Dorsolateral prefrontal cortex (tissue), 120 donors: ENCODE measurements at regions of chr18 and their contacts with region 1.

Region 1: GRCh38 chr18:26909599-26910290 is 44.2 kb upstream of the AQP4 start:
- DNase-seq: peak in 6 of 10 donors; percentile 23 to 63 (median 54)
- H3K4me3 ChIP-seq: no peak overlapping the region
- H3K27ac ChIP-seq: peak overlapping the region in 54 of 59 donors; percentile 19 to 88 (median 71)
- H3K27me3 ChIP-seq: no peaks in the 10 kb centered on the region
- CTCF ChIP-seq: no peak

Region 2: GRCh38 chr18:26863122-26863879 is 46.4 kb before region 1 on chr18:
- intact Hi-C with region 1: loop called in 1 of 2 experiments (anchors 5 kb)
- DNase-seq: peak; percentile 37 to 87 (median 76)
- H3K4me3 ChIP-seq: peak overlapping the region; percentile 11 to 67 (median 53)
- H3K27ac ChIP-seq: peak overlapping the region in 58 of 59 donors; percentile 61 to 96 (median 88)
- H3K27me3 ChIP-seq: peaks cover 0 to 34% (median 0%) of the 10 kb centered on the region in 45 donors
- CTCF ChIP-seq: no peak